ENCODE measurements at regions of chr1 and their contacts with region 1.

Region 1: GRCh38 chr1:172401892-172402291 is 18.6 kb upstream of the C1orf105 start:
- DNase-seq: no peak
- H3K4me3 ChIP-seq: no peak overlapping the region
- H3K27ac ChIP-seq: no peak overlapping the region
- H3K4me1 ChIP-seq: peaks cover 55% of the 10 kb centered on the region
- H3K27me3 ChIP-seq: no peaks in the 10 kb centered on the region

Region 2: DNA sequence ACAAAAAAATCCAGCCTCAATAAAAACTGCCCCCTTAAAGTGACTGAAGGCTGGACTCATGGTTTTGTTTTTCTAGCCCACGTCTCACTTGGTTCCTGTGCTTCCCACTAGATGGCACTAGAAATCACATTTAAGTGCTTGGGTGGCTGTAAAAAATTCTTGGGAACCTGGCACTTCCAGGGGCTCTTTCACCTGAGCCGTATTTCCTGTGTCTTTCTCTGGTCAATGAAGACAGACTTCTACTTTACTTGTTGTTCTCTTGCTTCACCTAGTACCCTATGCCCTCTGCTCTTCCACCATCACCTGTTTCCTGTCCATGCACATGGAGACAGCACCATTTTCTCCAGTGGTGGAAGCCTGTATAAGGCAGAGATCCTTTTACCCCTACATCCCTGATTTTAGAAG is 600.4 kb before region 1 on chr1:
- in situ Hi-C with region 1: loop called (anchors 25 kb)
- DNase-seq: peak; percentile 67
- H3K4me3 ChIP-seq: no peak overlapping the region
- H3K27ac ChIP-seq: no peak overlapping the region
- H3K4me1 ChIP-seq: peaks cover 15% of the 10 kb centered on the region
- H3K27me3 ChIP-seq: no peaks in the 10 kb centered on the region

Region 3: DNA sequence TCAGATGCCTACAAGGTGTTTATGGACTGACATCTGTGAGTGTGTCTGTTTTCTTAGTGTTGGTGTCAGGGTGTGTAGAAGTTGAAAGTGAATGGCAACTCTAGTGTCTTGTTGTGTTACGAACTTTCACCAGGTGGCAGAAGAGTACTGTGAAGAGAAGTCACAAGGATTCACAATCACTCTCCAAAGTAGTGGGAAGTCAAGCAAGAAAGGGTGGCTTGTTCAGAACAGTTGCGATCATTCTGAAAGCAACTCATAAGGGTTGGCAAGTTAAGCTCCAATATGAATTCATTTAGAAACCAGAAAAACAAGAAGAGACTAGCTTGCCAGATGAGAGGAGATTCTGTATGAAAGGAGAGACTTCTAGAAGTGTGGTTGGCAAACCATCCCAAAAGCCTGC is 343.1 kb after region 1 on chr1:
- in situ Hi-C with region 1: no loop called
- DNase-seq: peak; percentile 84
- H3K4me3 ChIP-seq: no peak overlapping the region
- H3K27ac ChIP-seq: no peak overlapping the region
- H3K4me1 ChIP-seq: peaks cover 19% of the 10 kb centered on the region
- H3K27me3 ChIP-seq: no peaks in the 10 kb centered on the region